IMR-90 (cell line): ENCODE measurements at regions of chr7 and their contacts with region 1.

Region 1: DNA sequence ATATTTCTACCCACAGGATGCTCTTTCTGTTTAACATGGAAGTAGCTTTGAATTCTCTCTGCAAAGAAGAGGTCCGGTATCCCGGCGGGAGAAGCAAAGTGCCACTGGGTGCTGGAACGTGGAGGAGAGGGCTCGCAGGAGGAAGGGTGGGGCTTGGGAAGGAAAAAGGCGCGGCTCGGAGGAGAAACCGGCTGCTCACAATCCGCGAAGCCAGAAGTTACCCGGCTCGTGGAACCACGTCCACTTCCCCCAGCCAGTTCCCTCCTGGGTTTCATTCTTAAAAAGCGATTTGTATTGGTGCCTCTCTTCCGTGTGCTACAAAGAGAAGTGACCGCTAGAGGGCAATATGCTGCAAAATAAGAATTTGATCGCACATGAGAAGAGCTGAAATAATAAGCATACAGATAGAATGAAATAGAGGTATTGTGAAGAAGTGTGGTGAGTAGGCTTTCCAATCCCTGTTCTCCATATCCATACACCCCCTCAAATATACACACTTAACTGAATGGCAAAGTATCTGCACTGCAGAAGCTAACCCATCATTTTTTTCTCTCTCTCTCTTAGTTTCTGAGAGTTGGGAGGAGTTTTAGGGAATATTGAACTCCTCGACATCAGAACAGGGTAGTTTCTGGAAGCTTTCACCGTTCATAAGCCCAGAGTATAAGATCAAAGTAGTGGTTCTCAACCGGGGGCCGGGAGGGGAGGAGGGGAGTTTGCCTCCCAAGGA is 31.1 kb downstream of the TRIL start:
- DNase-seq: peak; percentile 86
- ATAC-seq: peak; percentile 91
- H3K4me3 ChIP-seq: peak overlapping the region; percentile 48
- H3K27ac ChIP-seq: no peak overlapping the region
- H3K4me1 ChIP-seq: no peaks in the 10 kb centered on the region
- H3K27me3 ChIP-seq: peaks cover 14% of the 10 kb centered on the region
- CTCF ChIP-seq: peak; percentile 86
- POLR2A ChIP-seq: no peak
- RAD21 ChIP-seq: peak; percentile 76

Region 2: DNA sequence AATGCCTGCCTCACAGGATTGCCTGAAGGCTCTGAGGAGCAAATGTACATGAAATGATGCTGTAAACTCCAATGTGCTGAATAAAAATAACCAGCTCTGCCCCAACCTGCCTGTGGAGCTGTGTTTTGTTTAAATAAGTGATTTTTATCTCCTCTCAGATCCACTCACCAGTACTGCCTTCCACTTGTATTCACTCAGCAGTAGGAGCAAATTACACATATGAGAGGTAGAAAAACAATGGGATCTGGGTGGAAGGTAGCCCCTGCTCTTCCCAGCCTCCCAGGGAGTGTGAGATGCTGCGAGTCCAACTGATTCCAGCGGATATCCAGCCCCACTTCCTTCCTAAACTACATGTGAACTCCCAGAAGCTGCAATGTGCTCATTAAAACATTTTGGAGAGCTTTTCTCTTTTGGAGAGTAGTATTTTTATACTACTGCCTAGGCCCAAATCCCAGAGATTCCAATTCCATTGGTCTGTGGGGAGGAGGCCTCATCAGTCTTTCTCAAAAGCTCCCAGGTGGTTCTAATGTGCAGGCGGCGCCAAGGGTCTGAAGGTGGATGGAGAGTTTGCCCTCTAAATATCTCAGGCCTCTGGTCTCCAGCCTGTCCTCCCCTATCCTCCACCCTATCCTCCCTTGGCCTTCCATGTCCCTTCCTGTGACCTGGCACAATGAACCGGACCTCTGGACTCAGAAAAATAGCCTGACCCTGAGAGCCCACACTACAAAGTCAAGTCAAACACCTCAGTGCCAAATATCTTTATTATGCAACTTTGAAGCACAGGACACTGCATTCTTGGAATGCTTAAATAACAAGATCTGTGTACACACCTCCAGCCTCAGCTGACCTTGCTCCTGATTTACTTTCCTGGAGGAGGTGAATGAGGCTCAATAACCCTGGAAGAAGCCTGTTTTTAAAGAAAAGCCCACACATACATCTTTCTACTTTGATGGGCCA is 173.1 kb after region 1 on chr7:
- CTCF ChIA-PET with region 1: interaction called, 14 read pairs
- POLR2A ChIA-PET with region 1: no interaction called
- dilution Hi-C with region 1: no loop called
- in situ Hi-C with region 1: loop called (anchors 5 kb)
- intact Hi-C with region 1: loop called (anchors 1 kb)
- DNase-seq: no peak
- ATAC-seq: no peak
- H3K4me3 ChIP-seq: no peak overlapping the region
- H3K27ac ChIP-seq: no peak overlapping the region
- H3K4me1 ChIP-seq: no peaks in the 10 kb centered on the region
- H3K27me3 ChIP-seq: no peaks in the 10 kb centered on the region
- CTCF ChIP-seq: no peak
- POLR2A ChIP-seq: no peak
- RAD21 ChIP-seq: no peak

Region 3: DNA sequence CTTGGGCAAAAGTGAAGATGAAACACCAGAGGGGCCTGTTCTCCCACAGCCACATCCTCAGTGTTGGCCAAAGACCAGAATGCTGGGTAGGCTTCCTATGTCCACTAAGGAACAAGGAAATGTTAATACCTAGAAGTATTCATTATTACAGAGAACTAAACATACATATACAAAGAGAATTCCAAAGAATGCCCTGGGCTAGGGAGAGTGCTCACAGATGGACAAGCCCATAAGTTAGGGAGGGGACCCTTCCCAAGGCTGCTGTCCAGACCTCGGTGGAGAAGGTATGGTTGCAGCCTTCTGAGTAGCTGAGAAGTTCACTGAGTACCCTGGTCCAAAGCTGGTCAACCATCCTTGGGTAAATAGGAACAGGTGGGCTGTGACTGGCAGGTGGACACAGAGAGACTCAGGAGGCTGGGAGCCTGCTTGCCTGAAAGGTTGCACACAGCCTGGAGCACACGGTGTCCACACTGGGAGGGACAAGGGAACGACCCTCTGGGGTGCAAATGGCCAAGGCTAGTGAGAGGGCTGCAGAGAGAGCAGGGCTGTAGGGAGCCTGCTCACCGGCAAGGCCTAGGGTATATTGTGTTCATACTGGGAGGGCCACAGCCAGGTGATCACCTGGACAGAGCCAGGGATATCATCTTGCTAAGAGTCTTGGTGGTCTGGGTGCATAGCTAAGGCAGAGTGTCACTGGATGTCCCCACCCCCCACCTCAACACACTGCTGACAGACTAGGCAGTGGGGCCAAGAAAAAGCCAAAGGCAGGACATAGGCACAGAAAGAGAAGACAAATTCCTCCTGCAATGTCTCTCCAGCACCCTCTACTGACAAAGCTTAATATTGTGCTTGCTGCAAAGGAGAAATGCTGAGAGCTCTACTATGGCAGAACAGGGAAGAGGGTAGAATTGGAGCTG is 179.0 kb after region 1 on chr7:
- CTCF ChIA-PET with region 1: interaction called, 36 read pairs
- POLR2A ChIA-PET with region 1: no interaction called
- dilution Hi-C with region 1: no loop called
- in situ Hi-C with region 1: loop called (anchors 5 kb)
- intact Hi-C with region 1: loop called (anchors 1 kb)
- DNase-seq: peak; percentile 60
- ATAC-seq: peak; percentile 97
- H3K4me3 ChIP-seq: no peak overlapping the region
- H3K27ac ChIP-seq: no peak overlapping the region
- H3K4me1 ChIP-seq: no peaks in the 10 kb centered on the region
- H3K27me3 ChIP-seq: peaks cover 7% of the 10 kb centered on the region
- CTCF ChIP-seq: peak; percentile 87
- POLR2A ChIP-seq: no peak
- RAD21 ChIP-seq: peak; percentile 79